PC-3 (cell line): ENCODE measurements at regions of chr12 and their contacts with region 1.

Region 1: DNA sequence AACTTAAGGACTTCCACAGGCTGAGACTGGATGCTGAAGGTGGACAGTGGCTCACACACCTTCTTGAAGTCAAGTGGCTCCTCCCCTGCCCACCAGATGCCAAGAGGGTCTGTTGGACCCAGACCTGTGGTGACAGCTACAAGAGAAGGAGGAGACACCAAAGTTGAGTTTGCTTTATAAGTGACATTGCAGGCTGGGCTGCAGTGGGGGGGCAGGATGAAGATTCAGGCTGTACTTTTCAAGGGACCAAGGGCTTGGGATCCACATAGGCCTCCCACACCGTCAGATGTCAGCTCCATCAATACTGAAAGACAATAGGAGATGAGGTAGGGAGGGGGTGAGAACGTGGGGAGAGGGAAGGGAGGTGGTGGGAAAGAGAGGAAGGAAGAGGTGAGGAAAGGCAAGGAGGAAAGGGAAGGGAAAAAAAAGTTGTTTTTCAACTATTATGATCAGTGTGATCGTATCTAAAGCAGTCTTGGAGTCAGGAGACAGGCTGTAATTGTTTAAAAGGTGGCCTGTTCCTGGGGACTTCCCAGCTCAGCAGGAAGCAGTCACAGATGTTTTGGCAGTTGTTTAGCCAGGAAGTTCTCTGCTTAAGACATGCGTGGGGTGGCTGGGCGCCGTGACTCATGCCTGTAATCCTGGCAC is 84.1 kb upstream of the RESF1 start:
- DNase-seq: peak; percentile 48
- ATAC-seq: peak; percentile 71
- H3K4me3 ChIP-seq: no peak overlapping the region
- H3K27ac ChIP-seq: peak overlapping the region; percentile 52; the same call in 1 of the 2 replicates
- H3K4me1 ChIP-seq: no peaks in the 10 kb centered on the region
- H3K27me3 ChIP-seq: no peaks in the 10 kb centered on the region
- CTCF ChIP-seq: no peak

Region 2: GRCh38 chr12:31914927-31915326 is 39.8 kb after region 1 on chr12:
- CTCF ChIA-PET with region 1: no interaction called
- POLR2A ChIA-PET with region 1: interaction called, 14 read pairs
- intact Hi-C with region 1: no loop called
- DNase-seq: no peak
- ATAC-seq: no peak
- H3K4me3 ChIP-seq: no peak overlapping the region
- H3K27ac ChIP-seq: no peak overlapping the region
- H3K4me1 ChIP-seq: no peaks in the 10 kb centered on the region
- H3K27me3 ChIP-seq: no peaks in the 10 kb centered on the region
- CTCF ChIP-seq: no peak